ENCODE measurements at regions of chr11 and their contacts with region 1.

Region 1: DNA sequence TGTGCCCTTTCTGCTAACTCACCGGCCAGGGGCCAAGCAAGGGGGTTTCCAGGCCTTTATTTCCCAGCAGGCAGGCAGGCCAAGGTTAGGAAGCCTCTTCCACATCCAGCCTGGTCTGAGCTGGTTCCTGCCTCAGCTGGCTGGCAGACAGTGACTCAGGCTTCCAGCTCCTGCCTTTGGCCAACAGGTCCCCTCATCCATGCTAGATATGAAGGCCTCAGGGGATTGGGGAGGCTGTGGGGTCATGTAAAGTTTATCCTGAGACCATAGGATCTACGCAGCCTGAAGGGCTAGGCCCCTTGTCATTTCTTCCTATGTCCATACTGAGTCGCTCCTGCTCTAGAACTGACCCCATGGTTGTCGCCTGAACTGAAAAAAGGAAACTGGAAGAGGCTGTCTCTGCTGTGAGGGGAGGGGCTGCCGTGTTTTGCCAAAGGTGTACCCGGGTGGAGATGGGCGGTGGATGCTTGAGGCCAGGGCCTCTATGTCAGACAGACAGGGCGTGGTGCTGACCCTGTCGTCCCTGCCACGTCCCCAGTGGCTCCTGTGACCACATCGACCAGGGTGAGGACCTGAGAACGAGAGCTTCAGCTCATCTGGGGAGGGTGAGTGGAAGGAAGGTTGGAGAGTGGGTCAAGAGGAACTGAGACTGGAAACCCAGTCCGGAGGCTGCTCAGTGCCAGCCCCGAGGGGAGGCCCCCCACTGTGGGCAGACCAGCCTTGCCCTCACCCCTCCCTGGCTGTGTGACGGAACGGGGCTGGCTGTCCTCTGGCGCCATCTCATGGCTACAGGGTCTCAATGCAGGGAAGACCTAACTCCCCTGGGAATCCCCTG is 17.0 kb downstream of the P2RY6 start:
- DNase-seq: no peak
- H3K4me3 ChIP-seq: no peak overlapping the region
- CTCF ChIP-seq: peak; percentile 97

Region 2: DNA sequence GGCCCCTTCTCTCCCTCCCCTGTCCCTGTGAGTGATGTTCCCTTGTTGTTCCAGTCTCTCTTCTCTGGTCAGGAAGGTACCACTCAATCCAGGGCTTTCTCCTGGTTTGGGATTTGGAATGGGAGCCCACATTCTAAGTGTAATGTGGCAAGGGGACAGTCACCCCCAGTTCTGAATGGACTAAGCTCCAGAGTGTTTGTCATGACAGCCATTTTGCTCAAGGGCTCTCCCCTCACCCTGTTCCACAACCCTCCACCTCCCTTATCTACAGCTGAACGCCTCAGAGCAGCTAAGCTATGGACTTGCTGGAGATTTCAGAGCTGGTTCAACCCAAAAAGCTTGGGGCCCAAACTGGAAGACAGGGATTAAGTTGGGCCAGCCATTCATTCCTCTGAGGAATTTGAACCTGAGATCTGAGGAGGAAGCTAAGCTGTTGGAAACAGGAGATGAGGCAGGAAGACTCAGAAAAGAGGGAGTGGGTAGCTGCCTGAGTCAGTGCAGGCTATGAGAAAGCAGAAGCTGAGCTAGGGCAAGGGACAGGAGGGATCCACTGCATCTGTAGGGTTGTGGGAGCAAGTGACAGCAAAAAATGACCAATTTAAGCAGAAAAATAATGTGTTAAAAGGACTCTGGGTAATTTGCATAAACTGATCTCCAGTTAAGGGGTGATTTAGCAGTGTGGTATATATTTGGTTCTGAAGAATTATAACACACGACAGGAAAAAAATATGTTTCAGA is 124.1 kb before region 1 on chr11:
- CTCF ChIA-PET with region 1: interaction called, 11 read pairs
- POLR2A ChIA-PET with region 1: no interaction called
- DNase-seq: no peak
- H3K4me3 ChIP-seq: no peak overlapping the region
- CTCF ChIP-seq: no peak

Region 3: DNA sequence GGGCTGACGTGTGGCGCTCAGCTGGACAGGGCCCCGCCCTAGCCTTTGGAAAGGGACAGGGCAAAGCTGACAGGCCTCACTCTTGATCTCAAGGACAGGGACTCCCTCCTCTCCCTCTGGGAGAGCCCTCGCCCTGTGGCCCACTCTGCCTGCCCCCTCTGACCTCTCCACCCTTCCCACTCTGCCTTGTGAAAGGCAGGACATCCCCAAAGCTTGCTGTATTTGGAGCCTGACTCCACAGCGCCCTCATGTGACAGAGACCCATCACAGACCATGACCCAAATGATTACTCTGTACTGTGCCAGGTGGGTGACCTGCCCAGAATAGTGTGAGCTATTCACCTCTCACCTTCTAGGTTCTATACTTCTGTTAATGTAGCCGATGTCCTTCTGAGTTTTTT is 52.2 kb before region 1 on chr11:
- CTCF ChIA-PET with region 1: interaction called, 71 read pairs
- POLR2A ChIA-PET with region 1: no interaction called
- DNase-seq: no peak
- H3K4me3 ChIP-seq: no peak overlapping the region
- CTCF ChIP-seq: peak; percentile 34

Region 4: DNA sequence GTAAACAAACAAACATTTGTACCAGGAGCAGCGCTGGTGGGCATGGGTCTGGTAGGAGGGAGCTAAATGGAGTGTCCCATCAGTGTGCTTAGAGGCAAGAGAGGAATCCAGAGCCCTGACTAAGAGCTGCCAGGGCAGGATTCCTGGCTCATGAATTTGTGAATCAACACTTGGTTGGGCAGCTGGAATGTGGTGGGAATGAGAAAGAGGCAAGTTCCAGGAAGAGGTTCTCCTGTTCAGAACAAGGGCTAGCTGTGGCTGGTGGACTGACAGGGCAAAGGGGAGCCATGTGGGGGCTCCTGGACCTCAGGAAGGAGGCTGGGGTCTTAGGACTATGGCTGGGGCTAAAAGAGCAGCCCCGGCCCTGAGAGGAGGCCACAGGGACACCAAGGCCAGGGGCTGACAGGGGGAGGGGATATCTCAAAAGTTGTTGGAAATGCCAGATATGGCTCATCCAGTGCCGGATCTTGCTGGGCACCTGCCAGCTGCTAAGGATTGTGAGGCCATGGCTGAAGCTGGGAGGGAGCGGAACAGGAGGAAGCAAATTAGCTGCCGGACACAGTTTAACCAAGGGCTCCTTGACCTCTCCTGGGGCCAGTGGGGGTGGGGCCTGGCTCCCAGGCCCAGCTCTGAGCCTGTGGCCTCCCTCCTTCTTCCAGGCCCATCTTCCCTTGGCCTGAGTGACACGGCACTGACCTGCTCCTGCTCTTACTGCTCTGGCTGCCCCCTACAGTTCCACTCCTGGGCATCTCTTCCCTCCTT is 31.6 kb before region 1 on chr11:
- CTCF ChIA-PET with region 1: interaction called, 48 read pairs
- POLR2A ChIA-PET with region 1: no interaction called
- DNase-seq: peak; percentile 93
- H3K4me3 ChIP-seq: peak overlapping the region; percentile 6; the same call in 1 of the 2 replicates
- CTCF ChIP-seq: no peak

Region 5: DNA sequence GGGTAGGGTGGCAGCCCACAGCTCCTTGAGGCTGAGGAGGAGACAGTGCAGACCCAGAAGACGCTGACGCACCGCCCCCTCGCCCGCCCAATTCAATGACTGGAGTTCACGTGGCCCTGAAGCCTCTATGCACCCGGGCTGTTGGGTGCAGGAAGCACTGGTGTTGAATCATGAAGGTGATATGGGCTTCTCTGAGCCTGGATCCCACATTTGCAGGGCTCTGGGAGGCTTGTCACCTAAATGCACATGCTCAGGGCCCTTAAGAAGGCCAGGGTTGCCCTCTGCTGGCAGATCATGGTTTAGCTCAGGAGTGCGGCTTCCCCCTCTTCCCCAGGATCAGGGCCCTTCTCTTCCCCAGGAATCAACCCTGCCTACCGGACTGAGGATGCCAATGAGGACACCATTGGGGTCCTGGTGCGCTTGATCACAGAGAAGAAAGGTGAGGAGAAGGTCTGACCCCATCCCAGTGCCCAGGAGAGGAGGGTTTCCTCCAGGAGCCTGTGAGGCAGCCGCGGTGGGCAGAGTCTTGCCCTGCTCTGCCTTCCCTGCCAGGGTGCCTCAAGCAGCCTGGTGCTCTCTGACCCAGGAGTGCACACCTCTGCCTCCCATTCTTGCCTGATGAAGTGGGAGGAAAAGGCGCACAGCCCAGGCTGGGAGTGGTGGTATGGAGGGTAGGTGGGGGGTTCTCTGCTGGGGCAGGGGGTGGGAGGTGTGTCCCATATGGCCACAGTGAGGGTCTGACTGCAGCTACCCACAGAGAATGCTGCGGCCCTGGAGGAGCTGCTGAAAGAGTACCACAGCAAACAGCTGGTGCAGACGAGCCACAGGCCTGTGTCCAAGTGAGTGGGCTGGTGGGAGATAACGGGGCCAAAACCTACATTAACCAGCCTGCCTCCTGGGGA is 104.6 kb after region 1 on chr11:
- CTCF ChIA-PET with region 1: interaction called, 79 read pairs
- POLR2A ChIA-PET with region 1: no interaction called
- DNase-seq: no peak
- H3K4me3 ChIP-seq: no peak overlapping the region
- CTCF ChIP-seq: peak; percentile 86

Region 6: DNA sequence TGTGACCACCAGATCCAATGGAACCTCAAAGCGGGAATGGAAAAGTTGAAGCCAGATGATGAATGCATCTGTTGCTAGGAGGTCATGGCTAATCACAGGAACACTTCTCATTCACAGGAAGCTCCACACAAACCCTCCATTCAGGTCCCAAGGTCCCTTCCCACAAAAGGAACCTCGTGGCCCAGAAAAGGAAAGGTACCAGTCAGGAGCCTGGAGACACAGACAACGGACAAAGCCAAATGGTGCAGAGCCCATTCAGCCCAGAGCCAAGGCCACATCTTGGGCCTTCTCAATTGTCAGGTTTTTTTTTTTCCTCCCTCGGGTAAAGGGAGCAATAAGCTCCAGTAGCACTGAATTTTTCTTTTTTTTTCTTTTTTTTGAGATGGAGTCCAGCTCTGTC is 221.8 kb after region 1 on chr11:
- CTCF ChIA-PET with region 1: no interaction called
- POLR2A ChIA-PET with region 1: no interaction called
- DNase-seq: no peak
- H3K4me3 ChIP-seq: no peak overlapping the region
- CTCF ChIP-seq: no peak